AG04450 (cell line): ENCODE measurements at regions of chr6 and their contacts with region 1.

Region 1: GRCh38 chr6:56595490-56596122 is 47.1 kb downstream of the DST start:
- DNase-seq: no peak
- H3K4me3 ChIP-seq: no peak overlapping the region
- H3K27ac ChIP-seq: no peak overlapping the region
- H3K27me3 ChIP-seq: no peaks in the 10 kb centered on the region
- CTCF ChIP-seq: peak; percentile 60

Region 2: DNA sequence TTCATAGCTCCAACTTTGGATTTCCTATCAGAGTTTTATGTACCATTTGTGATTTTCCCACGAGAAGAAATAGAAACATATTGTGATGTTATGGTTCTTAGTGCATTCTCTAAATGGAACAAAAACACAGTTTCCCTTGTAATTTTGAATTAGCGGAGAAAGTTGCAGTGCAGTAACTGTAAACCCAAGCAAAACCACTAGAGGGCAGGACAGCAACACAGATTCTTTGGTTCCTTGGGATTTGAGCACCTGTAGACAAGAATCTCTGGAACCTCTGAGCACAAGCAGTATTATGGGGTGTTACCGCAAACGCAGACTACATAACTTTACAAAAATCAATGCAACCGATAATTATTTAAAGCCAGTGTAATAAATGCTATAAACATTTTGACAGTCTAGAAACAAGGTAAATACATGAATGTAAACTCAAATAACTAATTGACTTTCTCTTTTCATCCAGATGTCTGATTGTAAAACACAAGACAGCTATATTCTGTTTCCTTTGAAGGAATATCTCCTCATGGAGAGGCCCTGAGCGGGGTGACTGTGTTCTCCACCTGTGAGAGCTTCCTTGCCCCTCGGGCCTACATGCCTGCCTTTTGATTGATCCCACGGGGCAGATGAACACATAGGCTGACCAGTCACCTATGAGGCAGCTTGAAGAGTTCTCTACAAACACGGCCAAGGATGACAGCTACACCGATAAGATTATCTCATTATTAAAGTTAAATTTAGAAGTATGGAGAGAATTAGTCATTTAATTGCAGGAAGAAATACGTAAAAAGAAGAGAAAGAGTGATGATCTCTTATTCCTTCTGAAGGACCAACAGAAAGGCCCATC is 280.7 kb before region 1 on chr6:
- CTCF ChIA-PET with region 1: interaction called, 52 read pairs
- POLR2A ChIA-PET with region 1: no interaction called
- DNase-seq: no peak
- H3K4me3 ChIP-seq: no peak overlapping the region
- H3K27ac ChIP-seq: no peak overlapping the region
- H3K27me3 ChIP-seq: no peaks in the 10 kb centered on the region
- CTCF ChIP-seq: peak; percentile 86

Region 3: GRCh38 chr6:56359201-56359899 is 236.3 kb before region 1 on chr6:
- CTCF ChIA-PET with region 1: interaction called, 71 read pairs
- POLR2A ChIA-PET with region 1: no interaction called
- DNase-seq: peak; percentile 58
- H3K4me3 ChIP-seq: no peak overlapping the region
- H3K27ac ChIP-seq: no peak overlapping the region
- H3K27me3 ChIP-seq: no peaks in the 10 kb centered on the region
- CTCF ChIP-seq: peak; percentile 75

Region 4: GRCh38 chr6:56370561-56371211 is 224.9 kb before region 1 on chr6:
- CTCF ChIA-PET with region 1: interaction called, 14 read pairs
- POLR2A ChIA-PET with region 1: no interaction called
- DNase-seq: peak; percentile 59
- H3K4me3 ChIP-seq: no peak overlapping the region
- H3K27ac ChIP-seq: peak overlapping the region; percentile 63
- H3K27me3 ChIP-seq: no peaks in the 10 kb centered on the region
- CTCF ChIP-seq: no peak

Region 5: DNA sequence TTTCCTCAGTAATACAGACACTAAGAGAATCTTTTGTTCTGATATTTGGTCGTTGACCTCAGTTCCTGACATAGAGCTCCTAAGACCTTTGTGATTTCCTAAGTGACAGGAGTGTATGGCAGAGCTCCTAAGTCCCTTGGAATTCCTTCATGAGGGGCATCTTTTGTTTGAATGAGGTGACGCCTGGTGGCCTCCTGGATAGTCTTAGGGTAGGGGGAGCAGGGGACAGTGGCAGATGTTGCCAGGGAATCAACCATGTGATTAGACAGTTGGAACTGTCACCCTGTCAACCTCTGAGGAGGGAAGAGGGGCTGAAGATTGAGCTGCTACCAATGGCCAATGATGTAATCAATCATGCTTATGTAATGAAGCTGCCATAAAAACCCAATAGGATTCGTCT is 19.9 kb before region 1 on chr6:
- CTCF ChIA-PET with region 1: interaction called, 29 read pairs
- POLR2A ChIA-PET with region 1: no interaction called
- DNase-seq: no peak
- H3K4me3 ChIP-seq: no peak overlapping the region
- H3K27ac ChIP-seq: no peak overlapping the region
- H3K27me3 ChIP-seq: no peaks in the 10 kb centered on the region
- CTCF ChIP-seq: no peak

Region 6: DNA sequence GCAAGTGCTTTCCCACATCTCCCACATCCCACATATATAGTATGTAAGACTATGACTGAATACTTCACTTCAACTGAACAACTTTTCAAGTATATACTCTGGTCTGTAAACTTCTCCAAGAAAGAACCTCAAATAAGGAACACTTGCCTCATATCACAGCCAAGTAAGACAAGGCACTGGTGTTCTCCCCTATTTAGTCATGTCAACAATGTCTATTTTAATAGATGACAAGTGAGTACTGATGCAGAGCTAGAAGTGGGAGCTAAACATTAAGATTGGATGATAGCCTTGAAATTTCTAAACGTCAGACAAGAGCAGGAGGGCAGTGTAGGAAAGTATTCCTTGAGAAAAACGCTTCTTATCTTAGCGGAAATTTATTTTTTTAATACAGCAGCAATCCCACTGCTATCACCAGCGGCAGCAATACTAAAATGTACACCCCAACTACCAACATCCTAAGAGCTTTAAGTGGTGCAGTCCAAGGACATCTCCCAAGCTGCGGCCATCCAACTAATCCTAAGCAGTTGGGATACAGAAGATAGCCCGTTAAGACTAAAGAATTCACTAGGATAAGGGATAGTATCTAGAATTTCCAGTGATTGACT is 17.7 kb after region 1 on chr6:
- CTCF ChIA-PET with region 1: interaction called, 71 read pairs
- POLR2A ChIA-PET with region 1: no interaction called
- DNase-seq: no peak
- H3K4me3 ChIP-seq: no peak overlapping the region
- H3K27ac ChIP-seq: no peak overlapping the region
- H3K27me3 ChIP-seq: no peaks in the 10 kb centered on the region
- CTCF ChIP-seq: no peak